ENCODE measurements at regions of chr19 and their contacts with region 1.

Region 1: GRCh38 chr19:28466107-28467045 is 746.6 kb downstream of the UQCRFS1 start:
- DNase-seq: no peak
- H3K4me3 ChIP-seq: no peak overlapping the region
- H3K27ac ChIP-seq: no peak overlapping the region
- H3K4me1 ChIP-seq: no peaks in the 10 kb centered on the region
- H3K27me3 ChIP-seq: peaks cover 0 to 34% (median 0%) of the 10 kb centered on the region in 4 donors
- CTCF ChIP-seq: peak; percentile 39 to 74 (median 67)
- EP300 ChIP-seq: no peak
- POLR2A ChIP-seq: no peak

Region 2: DNA sequence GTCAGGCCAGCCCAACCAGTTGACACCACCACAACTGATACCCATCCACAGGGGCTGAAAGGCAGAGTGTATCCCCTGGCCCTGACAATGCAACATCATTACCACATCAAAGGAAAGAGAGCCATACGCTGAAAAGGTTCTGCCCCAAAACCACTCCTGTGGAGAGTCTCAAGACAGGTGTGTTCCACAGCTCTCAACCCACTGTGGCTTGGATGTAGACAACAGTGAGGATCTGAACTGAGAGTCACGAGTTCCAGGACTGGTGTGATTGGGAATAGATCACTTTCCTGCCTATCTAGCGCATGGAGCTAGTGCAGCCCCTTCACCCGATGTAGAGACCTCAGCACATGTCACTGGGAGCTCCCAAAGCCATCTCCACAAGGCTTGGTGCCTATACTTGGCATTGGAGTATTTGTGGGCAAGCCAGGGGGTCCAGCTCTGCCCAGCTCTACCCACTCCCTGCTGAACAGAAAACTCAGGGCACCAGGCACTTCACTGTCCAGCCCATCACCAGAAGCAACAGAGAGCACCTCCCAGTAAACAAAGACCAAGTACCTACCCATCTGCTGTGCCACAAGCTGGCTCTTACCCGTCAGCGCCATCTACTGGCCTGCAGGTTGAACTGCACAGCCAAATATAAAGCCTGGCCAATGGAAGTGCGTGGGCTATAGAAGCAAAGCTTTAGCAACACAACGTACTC is 167.1 kb after region 1 on chr19:
- intact Hi-C with region 1: loop called (anchors 10 kb)
- DNase-seq: peak; percentile 75
- H3K4me3 ChIP-seq: no peak overlapping the region
- H3K27ac ChIP-seq: no peak overlapping the region
- H3K4me1 ChIP-seq: no peaks in the 10 kb centered on the region
- H3K27me3 ChIP-seq: peaks cover 0 to 3% (median 0%) of the 10 kb centered on the region in 4 donors
- CTCF ChIP-seq: peak; percentile 31 to 55 (median 43)
- EP300 ChIP-seq: no peak
- POLR2A ChIP-seq: no peak

Region 3: GRCh38 chr19:28710278-28710677 is 243.9 kb after region 1 on chr19:
- intact Hi-C with region 1: loop called (anchors 5 kb)
- DNase-seq: no peak
- H3K4me3 ChIP-seq: no peak overlapping the region
- H3K27ac ChIP-seq: no peak overlapping the region
- H3K4me1 ChIP-seq: no peaks in the 10 kb centered on the region
- H3K27me3 ChIP-seq: peaks cover 0 to 16% (median 0%) of the 10 kb centered on the region in 4 donors
- CTCF ChIP-seq: peak; percentile 52 to 62 (median 62)
- EP300 ChIP-seq: no peak
- POLR2A ChIP-seq: no peak

Region 4: GRCh38 chr19:28878862-28879566 is 412.6 kb after region 1 on chr19:
- intact Hi-C with region 1: loop called (anchors 2 kb)
- DNase-seq: no peak
- H3K4me3 ChIP-seq: no peak overlapping the region
- H3K27ac ChIP-seq: no peak overlapping the region
- H3K4me1 ChIP-seq: peaks cover 9 to 16% (median 13%) of the 10 kb centered on the region in 4 donors
- H3K27me3 ChIP-seq: peaks cover 0 to 4% (median 0%) of the 10 kb centered on the region in 4 donors
- CTCF ChIP-seq: peak; percentile 66 to 75 (median 74)
- EP300 ChIP-seq: no peak
- POLR2A ChIP-seq: no peak